ENCODE measurements at regions of chr9 and their contacts with region 1.

Region 1: DNA sequence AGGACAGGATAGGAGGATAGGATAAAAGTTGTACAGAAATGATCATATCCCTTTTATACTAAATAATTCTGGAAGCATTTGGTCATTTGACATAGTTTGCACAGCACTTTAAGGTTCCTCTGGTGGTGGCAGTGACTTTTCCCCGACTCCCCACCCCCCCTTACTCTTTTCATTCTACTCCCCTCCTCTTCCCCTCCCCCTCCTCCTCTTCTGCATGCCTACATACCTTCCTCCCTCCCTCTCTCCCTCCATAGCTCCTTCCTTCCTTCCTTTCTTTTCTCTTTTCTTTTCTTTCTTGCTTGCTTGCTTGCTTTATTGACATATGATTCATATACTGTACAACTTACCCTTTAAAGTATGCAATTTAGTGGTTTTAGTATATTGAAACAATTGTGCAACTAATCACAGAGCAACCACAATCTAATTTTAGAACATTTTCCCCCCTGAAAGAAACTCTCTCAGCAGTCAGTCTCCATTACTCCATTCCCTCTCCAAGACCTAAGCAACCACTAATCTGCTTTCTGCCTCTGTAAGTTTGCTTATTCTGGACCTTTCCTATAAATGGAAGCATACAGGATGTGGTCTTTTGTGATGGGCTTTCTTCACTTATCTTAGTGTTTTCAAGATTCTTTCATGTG is 159.0 kb downstream of the HACD4 start:
- DNase-seq: no peak
- ATAC-seq: no peak

Region 2: DNA sequence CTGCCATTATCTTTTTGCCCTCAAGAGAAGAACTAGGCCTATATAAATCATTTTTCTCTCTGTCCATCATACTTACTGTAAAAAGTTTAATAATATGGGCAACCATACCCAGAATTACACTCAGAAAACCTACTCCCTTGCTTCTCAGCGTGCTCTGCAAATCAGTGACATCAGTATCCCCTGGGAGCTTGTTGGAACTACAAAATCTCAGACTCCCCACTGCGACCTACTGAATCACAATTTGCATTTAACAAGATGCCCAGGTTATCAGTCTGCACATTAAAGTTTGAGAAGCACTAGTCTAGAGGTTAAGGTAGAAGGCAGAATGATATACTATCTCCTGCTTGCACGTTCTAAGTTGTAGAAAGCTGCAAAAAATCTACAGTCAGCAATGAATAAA is 377.4 kb before region 1 on chr9:
- intact Hi-C with region 1: no loop called
- DNase-seq: no peak
- ATAC-seq: no peak

Region 3: DNA sequence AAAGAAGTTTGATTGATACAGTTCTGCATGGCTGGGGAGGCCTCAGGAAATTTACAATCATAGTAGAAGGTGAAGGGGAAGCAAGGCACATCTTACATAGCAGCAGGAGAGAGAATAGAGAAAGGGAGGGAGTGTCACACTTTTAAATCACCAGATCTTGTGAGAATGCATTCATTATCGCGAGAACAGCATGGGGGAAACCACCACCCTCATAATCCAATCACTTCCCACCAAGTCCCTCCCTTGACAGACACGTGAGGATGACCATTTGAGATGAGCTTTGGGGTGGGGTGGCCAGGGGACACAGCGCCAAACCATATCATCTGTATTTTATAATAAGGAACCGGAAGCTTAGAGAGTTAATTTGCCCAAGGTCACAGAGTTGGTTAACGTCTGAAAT is 202.1 kb before region 1 on chr9:
- intact Hi-C with region 1: no loop called
- DNase-seq: no peak
- ATAC-seq: no peak

Region 4: GRCh38 chr9:22595805-22596204 is 1723.3 kb after region 1 on chr9:
- intact Hi-C with region 1: loop called (anchors 5 kb)
- DNase-seq: no peak
- ATAC-seq: no peak

Measured in sciatic nerve (tissue), 2 donors.